SK-N-SH (cell line): ENCODE measurements at regions of chr3 and their contacts with region 1.

Region 1: DNA sequence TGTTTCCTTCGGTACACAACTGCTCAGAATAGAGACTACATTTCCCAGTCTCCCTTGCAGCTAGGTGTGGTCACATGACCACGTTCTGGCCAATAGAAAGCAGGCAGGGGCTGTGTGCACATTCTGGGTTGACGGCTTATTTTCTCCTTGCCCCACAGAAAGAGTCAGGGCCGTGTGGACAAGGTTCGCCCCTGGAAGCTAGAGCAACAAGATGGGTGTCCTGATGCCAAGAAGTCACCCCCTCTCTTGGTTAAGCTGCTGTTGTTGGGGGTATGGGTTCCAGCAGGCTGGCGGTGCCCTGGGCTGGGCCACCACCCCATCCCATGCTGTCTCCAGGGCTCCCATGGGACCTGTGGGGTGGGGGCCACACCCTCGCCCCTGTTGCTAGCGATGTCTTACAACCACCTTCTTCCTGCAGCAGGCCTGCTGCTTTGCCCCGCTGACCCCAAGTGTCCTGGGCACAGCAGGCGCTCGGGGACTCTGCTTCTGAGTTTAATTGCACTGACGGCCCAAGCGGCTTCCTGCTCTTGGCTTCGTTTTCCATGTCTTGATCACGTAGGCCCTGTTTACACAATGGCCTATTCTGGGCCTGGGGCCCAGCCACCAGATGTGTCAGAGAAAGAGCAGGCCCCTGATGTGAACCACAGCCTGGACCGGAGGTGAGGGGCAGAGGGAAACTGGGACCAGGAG is 24.9 kb downstream of the ABTB1 start:
- DNase-seq: peak; percentile 83
- H3K4me3 ChIP-seq: peak overlapping the region in 1 of 2 experiments; percentile 15; a peak in 1 of 4 replicates
- H3K27ac ChIP-seq: peak overlapping the region; percentile 69 to 92
- H3K4me1 ChIP-seq: peaks cover 11 to 60% of the 10 kb centered on the region in 2 experiments; a peak in 2 of 4 replicates
- H3K27me3 ChIP-seq: no peaks in the 10 kb centered on the region
- CTCF ChIP-seq: no peak
- EP300 ChIP-seq: no peak
- RAD21 ChIP-seq: no peak

Region 2: GRCh38 chr3:127445581-127446343 is 251.9 kb before region 1 on chr3:
- CTCF ChIA-PET with region 1: no interaction called
- POLR2A ChIA-PET with region 1: no interaction called
- DNase-seq: no peak
- H3K4me3 ChIP-seq: no peak overlapping the region
- H3K27ac ChIP-seq: no peak overlapping the region
- H3K4me1 ChIP-seq: peaks cover 0 to 11% of the 10 kb centered on the region in 2 experiments; a peak in 1 of 4 replicates
- H3K27me3 ChIP-seq: no peaks in the 10 kb centered on the region
- CTCF ChIP-seq: no peak
- EP300 ChIP-seq: no peak
- RAD21 ChIP-seq: no peak

Region 3: DNA sequence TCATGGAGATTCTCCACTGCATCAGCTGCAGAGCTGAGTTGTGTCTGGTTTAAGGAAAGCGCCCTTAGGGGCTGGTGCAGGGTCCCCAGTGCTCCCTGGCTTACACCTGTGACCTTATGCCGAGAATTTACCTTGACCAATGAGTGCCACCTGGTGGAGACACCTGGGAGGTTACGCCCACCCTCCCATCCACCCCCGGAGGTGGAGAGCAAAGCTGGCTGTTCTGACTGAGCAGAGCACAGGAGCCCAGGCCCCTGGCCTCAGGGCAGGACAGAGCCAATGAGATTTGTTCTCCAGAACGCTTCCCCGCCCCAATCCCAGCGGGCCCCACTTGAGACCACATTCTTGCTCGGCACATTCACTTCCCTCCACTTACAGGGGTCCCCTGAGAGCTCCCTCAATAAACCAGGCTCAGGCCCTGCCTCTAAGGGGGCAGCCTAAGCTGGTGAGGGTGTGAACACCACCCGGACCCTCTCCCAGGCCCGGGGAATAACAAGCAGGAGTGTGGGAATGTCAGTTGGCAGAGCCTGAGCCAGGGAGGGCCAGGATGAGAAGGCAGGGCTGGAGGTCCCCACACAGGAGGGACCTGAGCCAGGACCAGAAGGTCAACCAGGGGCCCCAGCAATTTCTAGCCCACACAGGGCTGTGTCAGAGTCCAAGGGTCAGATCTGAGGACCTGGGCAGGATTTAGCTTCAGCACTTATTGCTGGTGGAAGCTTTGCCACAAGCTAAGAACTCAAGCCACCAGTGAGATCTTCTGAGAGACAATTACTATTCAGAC is 224.3 kb before region 1 on chr3:
- CTCF ChIA-PET with region 1: no interaction called
- POLR2A ChIA-PET with region 1: no interaction called
- DNase-seq: peak; percentile 79
- H3K4me3 ChIP-seq: no peak overlapping the region
- H3K27ac ChIP-seq: no peak overlapping the region
- H3K4me1 ChIP-seq: peaks cover 0 to 4% of the 10 kb centered on the region in 2 experiments; a peak in 1 of 4 replicates
- H3K27me3 ChIP-seq: peaks cover 2% of the 10 kb centered on the region; the same call in 1 of the 2 replicates
- CTCF ChIP-seq: peak; percentile 37; the same call in 1 of the 2 replicates
- EP300 ChIP-seq: no peak
- RAD21 ChIP-seq: peak; percentile 54

Region 4: GRCh38 chr3:127672516-127673190 is 25.0 kb before region 1 on chr3 and contains the start of gene ABTB1:
- CTCF ChIA-PET with region 1: interaction called, 34 read pairs
- POLR2A ChIA-PET with region 1: no interaction called
- DNase-seq: peak; percentile 98
- H3K4me3 ChIP-seq: peak within 1 kb of the TSS; percentile 92 to 98
- H3K27ac ChIP-seq: peak within 1 kb of the TSS; percentile 53 to 77; a peak in 3 of 4 replicates
- H3K4me1 ChIP-seq: peaks cover 6 to 19% of the 10 kb centered on the region in 2 experiments; a peak in 1 of 4 replicates
- H3K27me3 ChIP-seq: no peaks in the 10 kb centered on the region
- CTCF ChIP-seq: no peak
- EP300 ChIP-seq: no peak
- RAD21 ChIP-seq: no peak
- polyA plus RNA-seq, gene ABTB1: 30.8 and 31.6 TPM in 2 replicates

Region 5: GRCh38 chr3:127717357-127718244 is 19.9 kb after region 1 on chr3:
- CTCF ChIA-PET with region 1: interaction called, 15 read pairs
- POLR2A ChIA-PET with region 1: no interaction called
- DNase-seq: no peak
- H3K4me3 ChIP-seq: no peak overlapping the region
- H3K27ac ChIP-seq: peak overlapping the region in 1 of 2 experiments; percentile 66; a peak in 2 of 4 replicates
- H3K4me1 ChIP-seq: peaks cover 0 to 56% of the 10 kb centered on the region in 2 experiments; a peak in 1 of 4 replicates
- H3K27me3 ChIP-seq: no peaks in the 10 kb centered on the region
- CTCF ChIP-seq: no peak
- EP300 ChIP-seq: no peak
- RAD21 ChIP-seq: no peak

Region 6: DNA sequence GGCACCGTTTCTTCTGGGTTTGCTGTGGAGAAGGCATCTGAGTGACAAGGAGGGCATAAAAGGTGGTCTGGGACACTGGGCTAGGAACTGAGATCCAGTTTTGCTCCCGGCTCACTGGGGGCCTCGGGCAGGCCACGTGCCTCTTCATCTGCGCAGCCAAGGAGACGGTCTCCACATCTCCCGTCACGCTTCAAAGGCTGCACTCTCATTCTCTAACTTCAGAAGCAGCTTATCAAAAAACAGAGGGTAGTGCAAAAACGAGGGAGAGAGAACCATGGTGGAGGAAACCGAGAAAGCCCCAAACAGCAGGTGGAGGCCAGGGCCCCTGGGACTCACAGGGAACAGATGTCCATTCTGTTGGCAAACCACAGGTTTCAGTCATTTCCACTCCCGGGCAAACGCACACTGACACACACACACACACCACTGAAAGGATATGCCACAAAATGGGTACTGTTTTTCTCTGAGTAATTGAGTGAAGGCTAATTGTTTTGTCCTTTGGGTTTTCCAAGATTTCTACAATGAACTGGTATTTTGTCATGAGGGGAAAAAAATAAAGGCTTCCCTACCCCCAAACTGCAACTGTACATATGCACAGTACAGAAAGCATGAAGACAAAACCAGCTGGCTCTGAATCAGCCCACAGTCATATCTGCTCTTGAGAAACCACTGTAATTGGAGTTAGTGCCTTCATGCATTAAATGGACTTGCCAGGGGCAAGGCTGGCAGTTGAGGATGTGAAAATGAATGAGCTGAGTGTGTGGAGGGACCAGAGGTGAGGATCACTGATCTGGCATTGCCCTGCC is 52.7 kb after region 1 on chr3:
- CTCF ChIA-PET with region 1: interaction called, 10 read pairs
- POLR2A ChIA-PET with region 1: interaction called, 7 read pairs
- DNase-seq: peak; percentile 52
- H3K4me3 ChIP-seq: no peak overlapping the region
- H3K27ac ChIP-seq: peak overlapping the region in 1 of 2 experiments; percentile 83; a peak in 2 of 4 replicates
- H3K4me1 ChIP-seq: peaks cover 31 to 44% of the 10 kb centered on the region in 2 experiments; a peak in 2 of 4 replicates
- H3K27me3 ChIP-seq: no peaks in the 10 kb centered on the region
- CTCF ChIP-seq: no peak
- EP300 ChIP-seq: peak in 1 of 2 experiments; percentile 51; a peak in 2 of 4 replicates
- RAD21 ChIP-seq: no peak

Region 7: DNA sequence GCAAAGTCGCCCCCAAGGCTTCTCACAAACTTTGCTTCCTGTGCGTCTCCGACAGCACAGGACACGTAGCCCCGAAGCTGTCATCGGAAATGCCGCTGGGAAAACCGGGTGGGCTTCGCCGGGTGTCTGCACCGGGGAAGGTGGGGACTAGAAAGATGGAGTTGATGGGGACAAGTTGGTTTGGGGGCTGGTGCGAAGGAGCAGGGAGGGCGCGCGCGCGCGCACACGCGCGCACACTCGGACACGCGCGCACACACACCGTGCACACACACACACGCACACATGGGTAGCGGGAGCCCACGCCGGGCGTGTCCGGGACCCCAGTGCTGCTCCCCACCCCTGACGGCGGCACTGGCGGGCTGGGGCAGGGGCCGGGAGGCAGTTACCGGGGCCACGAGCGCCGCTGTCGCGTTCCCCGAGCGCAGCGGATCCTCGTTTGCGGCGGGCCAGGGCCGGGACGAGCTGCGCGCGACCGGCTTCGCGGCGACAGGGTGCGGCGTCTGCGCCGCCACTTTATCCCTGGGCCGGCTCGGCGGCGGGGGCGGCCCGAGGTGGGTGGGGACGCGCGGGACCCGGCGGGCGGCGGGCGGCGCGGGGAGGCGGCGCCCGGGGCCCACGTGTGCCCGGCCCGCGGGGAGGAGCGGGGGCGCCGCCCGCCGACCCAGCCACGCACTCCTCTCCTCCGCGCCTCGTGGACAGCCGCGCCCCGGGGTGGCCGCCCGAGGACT is 125.2 kb after region 1 on chr3:
- CTCF ChIA-PET with region 1: interaction called, 27 read pairs
- POLR2A ChIA-PET with region 1: interaction called, 5 read pairs
- DNase-seq: peak; percentile 84
- H3K4me3 ChIP-seq: peak overlapping the region; percentile 63 to 79
- H3K27ac ChIP-seq: peak overlapping the region in 1 of 2 experiments; percentile 40; a peak in 1 of 4 replicates
- H3K4me1 ChIP-seq: peaks cover 13 to 16% of the 10 kb centered on the region in 2 experiments; a peak in 2 of 4 replicates
- H3K27me3 ChIP-seq: no peaks in the 10 kb centered on the region
- CTCF ChIP-seq: no peak
- EP300 ChIP-seq: no peak
- RAD21 ChIP-seq: peak; percentile 43

Region 8: GRCh38 chr3:127857333-127857732 is 159.6 kb after region 1 on chr3:
- CTCF ChIA-PET with region 1: interaction called, 10 read pairs
- POLR2A ChIA-PET with region 1: no interaction called
- DNase-seq: peak; percentile 42
- H3K4me3 ChIP-seq: no peak overlapping the region
- H3K27ac ChIP-seq: no peak overlapping the region
- H3K4me1 ChIP-seq: no peaks in the 10 kb centered on the region; a peak in 1 of 4 replicates
- H3K27me3 ChIP-seq: no peaks in the 10 kb centered on the region; the same call in 1 of the 2 replicates
- CTCF ChIP-seq: no peak; the same call in 1 of the 2 replicates
- EP300 ChIP-seq: no peak
- RAD21 ChIP-seq: peak; percentile 55

Region 9: GRCh38 chr3:127889461-127889863 is 191.8 kb after region 1 on chr3:
- CTCF ChIA-PET with region 1: no interaction called
- POLR2A ChIA-PET with region 1: no interaction called
- DNase-seq: no peak
- H3K4me3 ChIP-seq: no peak overlapping the region
- H3K27ac ChIP-seq: no peak overlapping the region
- H3K4me1 ChIP-seq: peaks cover 0 to 7% of the 10 kb centered on the region in 2 experiments; a peak in 1 of 4 replicates
- H3K27me3 ChIP-seq: no peaks in the 10 kb centered on the region; the same call in 1 of the 2 replicates
- CTCF ChIP-seq: no peak
- EP300 ChIP-seq: no peak
- RAD21 ChIP-seq: no peak

Region 10: GRCh38 chr3:127970966-127971592 is 273.4 kb after region 1 on chr3:
- CTCF ChIA-PET with region 1: interaction called, 29 read pairs
- POLR2A ChIA-PET with region 1: no interaction called
- DNase-seq: peak; percentile 51
- H3K4me3 ChIP-seq: peak overlapping the region in 1 of 2 experiments; percentile 33; a peak in 1 of 4 replicates
- H3K27ac ChIP-seq: no peak overlapping the region
- H3K4me1 ChIP-seq: peaks cover 0 to 9% of the 10 kb centered on the region in 2 experiments; a peak in 2 of 4 replicates
- H3K27me3 ChIP-seq: peaks cover 6% of the 10 kb centered on the region; the same call in 1 of the 2 replicates
- CTCF ChIP-seq: peak; percentile 73
- EP300 ChIP-seq: no peak
- RAD21 ChIP-seq: peak; percentile 91